K562 (cell line): ENCODE measurements at regions of chr15 and their contacts with region 1.

Region 1: DNA sequence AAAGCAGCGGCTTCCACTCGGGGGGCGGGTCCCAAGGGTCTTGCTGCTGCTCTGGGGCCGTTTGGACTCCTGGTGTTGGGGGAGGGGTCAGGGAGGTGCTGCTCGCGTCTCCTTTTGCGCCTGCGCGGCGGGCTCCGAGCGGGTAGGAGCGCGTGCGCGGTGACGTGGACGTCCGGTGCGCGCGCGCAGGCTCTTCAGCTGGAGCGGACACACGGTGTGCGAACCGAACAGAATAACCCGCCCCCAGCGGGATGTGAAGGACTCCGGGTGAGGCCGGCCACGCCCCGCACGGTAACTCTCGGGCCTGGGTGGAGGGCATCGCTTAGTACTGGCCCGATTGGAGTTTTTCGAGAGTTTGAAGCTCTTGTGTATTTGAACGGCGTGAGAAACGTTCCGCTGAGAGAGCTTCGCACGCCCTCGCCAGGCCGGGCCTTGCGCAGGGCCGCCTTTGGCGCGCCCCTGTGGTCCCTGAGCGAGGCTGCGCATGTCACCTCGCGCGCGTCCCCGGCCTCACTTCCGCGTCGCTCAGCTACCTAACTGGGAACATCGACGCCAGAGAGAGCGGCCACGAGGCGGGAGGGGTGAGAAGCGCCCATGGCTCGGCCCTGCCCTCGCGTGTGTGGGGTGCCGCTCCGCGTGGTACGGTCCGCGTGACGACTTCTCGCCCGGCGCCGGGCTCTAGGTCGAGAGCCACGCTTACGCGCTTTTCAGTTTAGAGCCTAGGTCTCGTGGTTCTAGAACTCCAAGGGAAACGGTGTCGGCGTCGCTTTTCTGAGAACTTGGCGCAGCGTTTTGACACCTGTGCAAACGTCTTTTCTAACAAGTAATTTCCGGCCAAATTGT is at the start of gene MGA:
- DNase-seq: peak; percentile 91 to 97 (median 94)
- ATAC-seq: peak; percentile 92
- H3K4me3 ChIP-seq: peak within 1 kb of the TSS; percentile 51
- H3K27ac ChIP-seq: peak within 1 kb of the TSS; percentile 95
- H3K4me1 ChIP-seq: peaks cover 18 to 26% of the 10 kb centered on the region in 2 experiments
- H3K27me3 ChIP-seq: no peaks in the 10 kb centered on the region
- CTCF ChIP-seq: peak; percentile 45 to 72 (median 56); a peak in 4 of 6 replicates
- EP300 ChIP-seq: peak; percentile 42
- POLR2A ChIP-seq: peak; percentile 84
- RAD21 ChIP-seq: peak; percentile 39 to 49
- polyA plus RNA-seq, gene MGA: 4.7 to 4.8 TPM

Region 2: DNA sequence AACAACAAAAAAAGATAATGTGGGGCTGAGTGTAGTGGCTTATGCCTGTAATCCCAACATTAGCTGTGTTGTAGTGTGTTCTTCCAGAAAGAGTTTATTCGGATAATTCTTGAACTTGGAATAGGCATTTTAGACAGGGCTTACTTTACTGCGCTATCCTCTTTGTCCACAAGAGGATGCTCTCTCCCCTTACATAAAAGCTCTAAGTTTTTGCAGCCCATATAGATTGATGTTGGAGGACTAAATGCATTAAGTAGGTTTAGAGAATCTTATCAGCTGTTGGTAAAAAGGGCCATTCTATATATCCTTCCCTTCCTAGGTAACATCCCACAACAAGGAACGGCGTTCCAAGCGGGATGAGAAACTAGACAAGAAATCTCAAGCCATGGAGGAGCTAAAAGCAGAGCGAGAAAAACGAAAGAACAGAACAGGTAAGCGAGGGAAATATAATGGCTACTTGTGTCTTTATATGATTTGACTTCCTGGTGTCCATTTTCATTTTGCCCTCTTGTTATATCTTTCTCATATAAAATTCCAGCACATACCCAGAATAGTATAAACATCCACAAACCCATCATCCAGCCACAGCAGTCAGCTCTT is 194.5 kb before region 1 on chr15:
- CTCF ChIA-PET with region 1: interaction called, 3 read pairs
- POLR2A ChIA-PET with region 1: no interaction called
- in situ Hi-C with region 1: no loop called
- intact Hi-C with region 1: loop called (anchors 10 kb)
- DNase-seq: peak; percentile 39 to 69 (median 48)
- ATAC-seq: peak; percentile 89
- H3K4me3 ChIP-seq: no peak overlapping the region
- H3K27ac ChIP-seq: no peak overlapping the region
- H3K4me1 ChIP-seq: no peaks in the 10 kb centered on the region
- H3K27me3 ChIP-seq: no peaks in the 10 kb centered on the region
- CTCF ChIP-seq: peak; percentile 72 to 98 (median 92)
- EP300 ChIP-seq: no peak
- POLR2A ChIP-seq: no peak
- RAD21 ChIP-seq: peak; percentile 90 to 97

Region 3: DNA sequence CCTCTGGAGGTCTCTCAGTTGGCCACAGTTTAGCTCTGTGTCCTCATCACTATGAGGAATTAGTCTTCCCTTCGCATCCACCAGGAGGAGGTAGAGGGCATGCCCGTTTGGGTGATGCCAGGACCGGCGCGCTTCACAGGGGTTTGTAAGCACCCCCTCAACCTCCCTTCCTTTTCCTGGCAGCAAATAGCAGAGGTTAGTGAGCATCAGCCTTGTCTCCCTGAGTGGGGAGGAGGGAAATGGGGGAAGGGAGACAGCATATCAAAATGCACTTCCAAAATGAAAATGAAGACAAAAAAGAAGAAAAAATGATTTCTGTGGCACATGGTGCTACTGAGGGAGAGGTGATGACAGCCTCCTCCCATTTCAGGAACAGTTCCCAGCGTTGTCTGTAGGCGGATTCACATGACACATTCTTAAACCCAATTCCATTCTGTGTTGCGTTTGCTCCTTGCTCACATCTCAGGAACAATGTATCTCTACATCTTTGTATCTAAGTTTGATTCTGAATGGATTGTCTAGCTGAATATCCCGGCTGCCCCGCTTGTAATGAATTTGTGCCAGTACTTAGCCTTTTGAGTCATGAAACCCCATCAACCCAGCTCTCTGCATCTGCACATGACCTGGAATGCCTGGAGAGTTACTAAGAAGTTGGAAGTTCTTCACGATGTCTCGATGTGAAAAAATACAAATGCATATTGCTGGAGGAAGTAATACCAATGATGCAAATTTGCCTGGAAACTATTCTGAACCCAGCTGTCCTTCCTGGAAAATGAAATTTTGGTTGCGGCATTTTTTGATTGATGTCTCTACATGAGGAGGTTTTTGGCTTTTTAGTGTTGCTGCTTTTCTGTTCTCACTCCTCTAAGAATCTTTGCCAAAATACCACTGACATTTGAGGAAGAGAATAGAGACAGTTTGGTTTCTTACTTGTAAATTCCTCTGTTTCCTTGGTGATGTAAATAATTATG is 56.2 kb before region 1 on chr15:
- CTCF ChIA-PET with region 1: no interaction called
- POLR2A ChIA-PET with region 1: interaction called, 3 read pairs
- in situ Hi-C with region 1: no loop called
- intact Hi-C with region 1: loop called (anchors 5 kb)
- DNase-seq: peak; percentile 63 to 65 (median 64)
- ATAC-seq: peak; percentile 93
- H3K4me3 ChIP-seq: no peak overlapping the region
- H3K27ac ChIP-seq: no peak overlapping the region
- H3K4me1 ChIP-seq: peaks cover 0 to 16% of the 10 kb centered on the region in 2 experiments; a peak in 3 of 5 replicates
- H3K27me3 ChIP-seq: peaks cover 0 to 7% of the 10 kb centered on the region in 2 experiments; a peak in 3 of 5 replicates
- CTCF ChIP-seq: peak; percentile 70 to 83 (median 71)
- EP300 ChIP-seq: no peak
- POLR2A ChIP-seq: no peak
- RAD21 ChIP-seq: peak; percentile 58 to 59; a peak in 3 of 4 replicates

Region 4: GRCh38 chr15:41671656-41672648 is 11.5 kb after region 1 on chr15:
- CTCF ChIA-PET with region 1: no interaction called
- POLR2A ChIA-PET with region 1: interaction called, 30 read pairs
- in situ Hi-C with region 1: no loop called
- intact Hi-C with region 1: no loop called
- DNase-seq: no peak
- ATAC-seq: peak; percentile 81
- H3K4me3 ChIP-seq: no peak overlapping the region
- H3K27ac ChIP-seq: peak overlapping the region; percentile 8; the same call in 1 of the 3 replicates
- H3K4me1 ChIP-seq: peaks cover 5 to 7% of the 10 kb centered on the region in 2 experiments; a peak in 3 of 5 replicates
- H3K27me3 ChIP-seq: no peaks in the 10 kb centered on the region
- CTCF ChIP-seq: no peak
- EP300 ChIP-seq: no peak
- POLR2A ChIP-seq: no peak
- RAD21 ChIP-seq: no peak